IMR-90 (cell line): ENCODE measurements at regions of chr1 and their contacts with region 1.

Region 1: DNA sequence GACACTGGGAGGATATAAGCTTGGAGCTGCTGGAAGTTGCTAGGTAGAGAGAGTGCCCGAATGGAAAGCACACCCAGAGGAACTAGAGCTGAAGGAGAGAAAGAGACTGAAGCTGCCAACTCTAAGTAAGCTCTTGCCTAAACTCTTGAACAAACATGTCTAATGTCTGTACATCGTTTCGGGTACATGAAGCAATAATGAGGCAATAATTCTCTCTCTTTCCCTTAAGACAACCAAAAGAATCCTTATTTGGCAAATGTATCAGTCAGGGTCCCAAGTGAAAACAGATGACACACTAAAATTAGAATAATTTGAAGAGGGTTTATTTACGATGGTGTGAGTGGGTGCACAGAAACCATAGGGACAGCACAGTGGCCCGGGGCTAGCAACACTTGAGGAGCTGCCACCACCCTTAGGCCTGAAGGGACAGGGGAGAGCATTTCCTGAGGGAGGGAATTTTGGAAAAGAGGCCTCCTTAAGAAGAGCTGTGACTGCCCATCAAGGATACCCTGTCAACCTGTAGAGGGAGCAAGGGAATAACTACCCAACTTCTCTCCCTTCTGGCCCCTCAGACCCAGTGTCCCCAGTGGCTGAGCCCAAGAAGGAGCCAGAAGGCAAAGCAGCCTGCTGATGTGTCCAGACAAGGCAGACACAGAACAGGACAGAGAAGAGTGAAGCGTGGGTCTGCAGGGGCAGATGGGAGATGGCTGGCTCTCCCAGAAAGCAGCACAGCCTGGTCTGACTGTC is 36.1 kb upstream of the KHDRBS1 start:
- DNase-seq: peak; percentile 47
- ATAC-seq: peak; percentile 75
- H3K4me3 ChIP-seq: no peak overlapping the region
- H3K27ac ChIP-seq: peak overlapping the region; percentile 22; the same call in 1 of the 2 replicates
- H3K4me1 ChIP-seq: peaks cover 6% of the 10 kb centered on the region
- H3K27me3 ChIP-seq: peaks cover 5% of the 10 kb centered on the region
- CTCF ChIP-seq: peak; percentile 39
- POLR2A ChIP-seq: no peak
- RAD21 ChIP-seq: peak; percentile 42

Region 2: GRCh38 chr1:31372961-31373896 is 604.3 kb before region 1 on chr1 and contains the start of gene FABP3:
- CTCF ChIA-PET with region 1: no interaction called
- POLR2A ChIA-PET with region 1: interaction called, 11 read pairs
- dilution Hi-C with region 1: no loop called
- in situ Hi-C with region 1: no loop called
- intact Hi-C with region 1: no loop called
- DNase-seq: peak; percentile 51
- ATAC-seq: peak; percentile 58
- H3K4me3 ChIP-seq: peak within 1 kb of the TSS; percentile 24
- H3K27ac ChIP-seq: peak within 1 kb of the TSS; percentile 0
- H3K4me1 ChIP-seq: peaks cover 7% of the 10 kb centered on the region
- H3K27me3 ChIP-seq: no peaks in the 10 kb centered on the region
- CTCF ChIP-seq: no peak
- POLR2A ChIP-seq: no peak
- RAD21 ChIP-seq: no peak
- total RNA-seq, gene FABP3: 4.8 and 5.6 TPM in 2 replicates

Region 3: DNA sequence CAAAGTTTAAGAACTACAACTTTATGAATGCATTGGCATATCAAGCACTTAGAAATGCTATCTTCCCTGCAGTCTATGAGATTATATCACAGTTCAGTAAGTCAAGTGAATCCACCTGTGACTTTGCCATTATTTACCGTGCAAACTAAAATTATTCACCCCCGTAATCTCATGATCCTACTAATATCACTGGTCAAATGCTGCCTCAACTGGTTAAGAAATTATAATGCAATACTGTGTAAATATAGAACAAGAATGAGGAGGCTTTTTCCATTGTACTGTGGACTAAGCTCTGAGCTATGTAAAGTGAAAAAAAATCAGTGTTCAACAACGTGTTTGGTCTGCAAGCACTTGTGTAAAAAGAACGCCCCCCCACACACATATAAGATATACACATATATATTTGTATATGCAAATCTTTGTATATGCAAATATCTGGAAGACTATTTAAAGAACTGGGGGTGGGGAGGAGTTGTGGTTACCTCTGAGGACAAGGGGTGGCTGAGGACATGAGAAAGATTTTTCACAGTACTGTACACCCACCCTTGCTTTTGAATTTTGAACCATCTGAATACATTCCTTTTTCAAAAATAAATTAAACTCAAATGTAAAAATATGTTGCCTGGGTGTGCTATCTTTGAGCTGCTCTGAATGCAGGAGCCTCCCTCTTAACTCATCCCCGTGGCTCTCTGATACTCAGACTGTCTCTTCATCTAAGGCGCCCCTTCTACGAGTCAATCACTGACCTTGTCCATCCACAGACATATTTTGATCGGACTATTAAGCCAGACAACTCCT is 96.5 kb before region 1 on chr1:
- CTCF ChIA-PET with region 1: no interaction called
- POLR2A ChIA-PET with region 1: no interaction called
- dilution Hi-C with region 1: no loop called
- in situ Hi-C with region 1: loop called (anchors 25 kb)
- intact Hi-C with region 1: no loop called
- DNase-seq: peak; percentile 12
- ATAC-seq: peak; percentile 62
- H3K4me3 ChIP-seq: no peak overlapping the region
- H3K27ac ChIP-seq: no peak overlapping the region
- H3K4me1 ChIP-seq: peaks cover 4% of the 10 kb centered on the region
- H3K27me3 ChIP-seq: peaks cover 2% of the 10 kb centered on the region; the same call in 1 of the 2 replicates
- CTCF ChIP-seq: no peak
- POLR2A ChIP-seq: no peak
- RAD21 ChIP-seq: no peak